ENCODE measurements at regions of chr5 and their contacts with region 1.

Region 1: DNA sequence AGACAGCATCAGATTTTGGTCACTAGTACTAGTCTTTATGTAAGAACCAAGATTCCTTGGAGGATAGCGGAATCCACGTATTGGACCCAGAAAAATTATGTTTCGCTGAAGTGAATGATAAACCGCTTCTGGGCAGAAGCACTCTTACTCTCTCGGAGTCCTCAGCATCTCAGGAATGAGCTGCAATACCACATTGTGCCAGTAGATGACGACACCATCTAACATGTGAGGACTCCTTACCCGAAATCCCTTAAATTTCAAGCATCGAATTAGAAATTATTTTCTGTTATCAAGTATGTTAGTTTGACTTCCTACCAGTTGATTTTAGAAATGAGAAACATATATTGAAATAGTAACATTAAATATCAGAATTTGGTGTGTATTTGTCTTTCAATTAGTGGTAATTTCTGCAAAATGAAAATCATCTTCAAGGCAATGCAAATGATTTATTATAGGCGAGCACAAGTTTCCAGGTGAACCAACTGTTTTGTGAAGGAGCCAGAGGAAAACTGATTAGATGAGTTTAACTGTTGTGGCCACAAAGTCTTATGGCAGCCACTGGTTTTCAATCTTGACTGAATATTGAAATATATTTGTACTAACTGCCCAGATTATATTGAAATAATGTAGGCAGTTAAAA is 66.0 kb upstream of the CAMK4 start:
- DNase-seq: peak; percentile 67
- H3K4me3 ChIP-seq: no peak overlapping the region
- H3K27ac ChIP-seq: no peak overlapping the region
- H3K4me1 ChIP-seq: no peaks in the 10 kb centered on the region
- H3K27me3 ChIP-seq: no peaks in the 10 kb centered on the region
- CTCF ChIP-seq: peak; percentile 89 to 98 (median 93)
- POLR2A ChIP-seq: no peak

Region 2: GRCh38 chr5:111280282-111280951 is 122.2 kb after region 1 on chr5:
- intact Hi-C with region 1: loop called (anchors 5 kb)
- DNase-seq: no peak
- H3K4me3 ChIP-seq: no peak overlapping the region
- H3K27ac ChIP-seq: no peak overlapping the region
- H3K4me1 ChIP-seq: no peaks in the 10 kb centered on the region
- H3K27me3 ChIP-seq: no peaks in the 10 kb centered on the region
- CTCF ChIP-seq: no peak
- POLR2A ChIP-seq: no peak

Region 3: DNA sequence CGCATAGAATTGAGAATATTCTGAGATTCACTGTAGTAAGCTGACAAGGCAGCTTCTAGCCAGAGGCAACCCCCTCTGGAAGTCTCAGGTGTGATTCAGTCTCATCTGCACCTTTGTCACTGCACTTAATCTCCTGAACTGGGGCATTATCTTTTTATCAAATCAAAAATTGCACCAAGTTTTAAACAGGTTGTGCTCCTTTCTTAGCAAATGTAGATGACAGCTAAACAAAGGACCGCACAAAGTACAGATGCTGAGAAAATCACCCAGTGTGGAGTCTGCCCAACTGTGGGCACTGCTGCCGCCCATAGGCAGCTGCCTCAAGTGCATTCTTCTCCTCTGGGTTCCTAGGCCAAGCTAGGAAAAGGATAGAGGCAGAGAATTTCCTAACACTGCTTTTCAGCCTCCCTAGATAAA is 303.0 kb after region 1 on chr5:
- intact Hi-C with region 1: loop called (anchors 5 kb)
- DNase-seq: no peak
- H3K4me3 ChIP-seq: no peak overlapping the region
- H3K27ac ChIP-seq: no peak overlapping the region
- H3K4me1 ChIP-seq: no peaks in the 10 kb centered on the region
- H3K27me3 ChIP-seq: no peaks in the 10 kb centered on the region
- CTCF ChIP-seq: no peak
- POLR2A ChIP-seq: no peak

Region 4: DNA sequence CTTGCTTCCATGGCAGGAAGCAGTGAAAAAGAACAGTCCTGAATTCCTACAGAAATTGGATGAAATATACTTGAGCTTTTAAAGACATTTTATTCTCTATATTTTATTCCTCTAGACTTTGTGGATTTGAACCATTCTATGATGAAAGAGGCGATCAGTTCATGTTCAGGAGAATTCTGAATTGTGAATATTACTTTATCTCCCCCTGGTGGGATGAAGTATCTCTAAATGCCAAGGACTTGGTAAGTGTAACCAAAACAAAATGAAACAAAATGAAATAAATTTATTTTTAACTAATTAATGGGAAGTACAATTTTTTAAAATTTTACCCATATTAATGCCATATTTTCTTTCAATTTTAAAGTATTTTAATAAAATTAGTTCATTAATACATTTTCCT is 320.0 kb after region 1 on chr5:
- intact Hi-C with region 1: loop called (anchors 5 kb)
- DNase-seq: no peak
- H3K4me3 ChIP-seq: no peak overlapping the region
- H3K27ac ChIP-seq: no peak overlapping the region
- H3K4me1 ChIP-seq: no peaks in the 10 kb centered on the region
- H3K27me3 ChIP-seq: no peaks in the 10 kb centered on the region
- CTCF ChIP-seq: no peak
- POLR2A ChIP-seq: no peak

Region 5: DNA sequence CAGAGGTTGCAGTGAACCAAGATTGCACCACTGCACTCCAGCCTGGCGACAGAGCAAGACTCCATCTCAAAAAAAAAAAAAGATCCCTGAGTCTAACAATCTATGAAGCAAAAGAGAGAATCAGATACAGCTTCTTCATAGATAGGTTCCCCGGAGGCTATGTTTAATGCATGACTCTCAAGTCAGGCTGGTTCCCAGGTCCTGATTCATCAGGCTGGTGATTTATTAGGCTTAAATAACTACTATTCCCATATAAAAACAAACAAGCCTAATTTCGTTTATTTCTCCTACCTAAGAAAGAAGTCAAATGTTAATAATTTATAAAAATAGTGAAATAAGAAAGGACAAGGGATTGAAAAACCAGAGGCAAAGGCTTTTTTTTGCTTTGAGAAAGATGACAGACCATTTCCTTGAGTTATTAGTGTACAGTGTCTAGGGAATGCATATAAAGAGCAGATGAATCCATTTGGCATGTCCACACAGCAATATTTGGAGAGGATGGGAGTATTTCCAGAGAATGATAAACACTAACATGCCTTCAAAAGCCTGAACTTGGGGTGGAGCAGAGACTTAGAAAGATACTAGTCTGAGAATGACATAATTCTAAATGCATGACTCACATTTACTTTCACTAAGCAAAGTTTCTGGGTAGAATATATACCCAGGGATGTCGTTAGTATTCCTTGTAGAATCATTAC is 483.5 kb after region 1 on chr5:
- intact Hi-C with region 1: no loop called
- DNase-seq: no peak
- H3K4me3 ChIP-seq: no peak overlapping the region
- H3K27ac ChIP-seq: no peak overlapping the region
- H3K4me1 ChIP-seq: no peaks in the 10 kb centered on the region
- H3K27me3 ChIP-seq: no peaks in the 10 kb centered on the region
- CTCF ChIP-seq: no peak
- POLR2A ChIP-seq: no peak

Region 6: GRCh38 chr5:112146323-112147226 is 988.4 kb after region 1 on chr5:
- intact Hi-C with region 1: loop called (anchors 5 kb)
- DNase-seq: peak; percentile 66
- H3K4me3 ChIP-seq: no peak overlapping the region
- H3K27ac ChIP-seq: no peak overlapping the region
- H3K4me1 ChIP-seq: no peaks in the 10 kb centered on the region
- H3K27me3 ChIP-seq: no peaks in the 10 kb centered on the region
- CTCF ChIP-seq: peak; percentile 69 to 90 (median 84)
- POLR2A ChIP-seq: no peak